GM12878 (cell line): ENCODE measurements at regions of chr2 and their contacts with region 1.

Region 1: GRCh38 chr2:200525882-200526651 is at the start of gene SGO2:
- DNase-seq: peak; percentile 85
- ATAC-seq: peak; percentile 100
- H3K4me3 ChIP-seq: peak within 1 kb of the TSS; percentile 87
- H3K27ac ChIP-seq: peak within 1 kb of the TSS; percentile 82
- H3K4me1 ChIP-seq: peaks cover 3% of the 10 kb centered on the region; the same call in 1 of the 2 replicates
- H3K27me3 ChIP-seq: no peaks in the 10 kb centered on the region; a peak in 1 of 4 replicates
- CTCF ChIP-seq: no peak
- EP300 ChIP-seq: no peak
- POLR2A ChIP-seq: peak; percentile 86
- RAD21 ChIP-seq: no peak
- polyA plus RNA-seq, gene SGO2: 15.8 to 30.7 TPM

Region 2: GRCh38 chr2:200448455-200448854 is 77.6 kb before region 1 on chr2:
- CTCF ChIA-PET with region 1: no interaction called
- POLR2A ChIA-PET with region 1: no interaction called
- RAD21 ChIA-PET with region 1: no interaction called
- SMC1A ChIA-PET with region 1: no interaction called
- in situ Hi-C with region 1: no loop called
- intact Hi-C with region 1: no loop called
- DNase-seq: no peak
- ATAC-seq: no peak
- H3K4me3 ChIP-seq: no peak overlapping the region
- H3K27ac ChIP-seq: no peak overlapping the region
- H3K4me1 ChIP-seq: 0 out of 2 replicates have a peak, but pooled peaks cover 2% of the 10 kb centered on the region
- H3K27me3 ChIP-seq: no peaks in the 10 kb centered on the region
- CTCF ChIP-seq: no peak
- EP300 ChIP-seq: no peak
- POLR2A ChIP-seq: no peak
- RAD21 ChIP-seq: no peak

Region 3: DNA sequence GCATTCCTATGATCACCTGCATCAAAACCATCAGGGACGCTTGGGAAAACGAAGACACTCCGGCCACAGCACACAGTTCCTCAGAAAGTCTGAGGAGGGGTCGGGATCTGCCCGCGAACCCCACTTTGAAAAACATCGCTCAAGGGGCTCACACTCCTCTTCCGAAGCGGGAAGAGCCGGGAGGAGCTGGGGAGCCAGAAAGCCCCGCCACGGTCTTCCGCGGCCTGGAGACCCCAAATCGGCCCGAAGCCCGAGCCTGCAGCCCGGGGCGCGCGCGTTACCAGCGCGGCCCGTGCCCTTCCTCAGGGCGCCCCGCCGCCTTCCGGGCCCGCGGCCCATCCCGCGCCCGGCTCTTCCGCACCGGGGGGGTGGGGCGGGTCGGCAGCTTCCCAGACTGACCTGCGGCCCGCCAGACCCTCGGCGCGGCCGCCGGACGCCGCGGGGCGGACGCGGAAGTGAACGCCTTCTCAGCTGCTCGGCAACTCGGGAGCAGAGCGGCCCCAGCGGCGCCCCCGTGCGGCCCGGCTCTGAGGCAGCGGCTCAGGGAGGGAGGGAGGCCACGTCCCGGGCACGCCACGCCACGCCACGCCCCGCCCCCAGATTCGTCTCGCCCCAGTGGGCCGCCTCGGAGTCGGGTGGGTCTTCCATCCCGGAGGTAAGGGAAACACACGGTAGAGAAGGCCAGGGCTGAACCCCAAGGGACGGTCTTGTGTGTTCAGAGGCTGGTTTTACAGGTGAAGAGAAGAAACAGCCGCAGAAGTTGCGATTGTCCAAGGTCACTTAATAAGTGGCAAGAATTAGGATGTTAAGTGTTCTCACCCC is 16.2 kb before region 1 on chr2 and contains the start of gene KCTD18:
- CTCF ChIA-PET with region 1: interaction called, 21 read pairs
- POLR2A ChIA-PET with region 1: interaction called, 14 read pairs
- RAD21 ChIA-PET with region 1: interaction called, 4 read pairs
- SMC1A ChIA-PET with region 1: interaction called, 7 read pairs
- in situ Hi-C with region 1: no loop called
- intact Hi-C with region 1: no loop called
- DNase-seq: peak; percentile 62
- ATAC-seq: peak; percentile 99
- H3K4me3 ChIP-seq: peak within 1 kb of the TSS; percentile 86
- H3K27ac ChIP-seq: peak within 1 kb of the TSS; percentile 80
- H3K4me1 ChIP-seq: no peaks in the 10 kb centered on the region
- H3K27me3 ChIP-seq: no peaks in the 10 kb centered on the region
- CTCF ChIP-seq: peak; percentile 78 to 97 (median 79)
- EP300 ChIP-seq: no peak
- POLR2A ChIP-seq: peak; percentile 88
- RAD21 ChIP-seq: peak; percentile 23; the same call in 1 of the 2 replicates
- polyA plus RNA-seq, gene KCTD18: 1.4 to 3.7 TPM